ENCODE measurements at regions of chr2 and their contacts with region 1.

Region 1: DNA sequence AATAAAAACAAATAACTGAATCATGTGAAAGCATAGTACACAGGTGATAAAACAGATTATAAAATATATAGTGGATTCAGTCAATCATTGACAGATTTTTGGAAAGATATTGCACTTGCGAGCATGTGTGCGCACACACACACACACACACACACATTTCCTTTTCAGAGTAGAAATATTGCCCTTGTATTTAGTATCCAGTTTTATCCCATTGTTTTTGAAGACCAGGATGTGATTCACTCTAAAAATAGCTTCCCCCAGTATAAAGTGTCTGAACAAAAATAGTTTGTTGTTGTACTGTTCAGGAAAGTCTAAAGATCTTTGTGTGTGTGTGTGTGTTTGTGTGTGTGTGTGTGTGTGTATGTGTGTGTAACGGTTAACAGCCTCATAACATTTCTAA is 145.4 kb downstream of the CALCRL start:
- DNase-seq: no peak
- H3K4me3 ChIP-seq: peak overlapping the region; percentile 47
- H3K27ac ChIP-seq: peak overlapping the region; percentile 60
- H3K4me1 ChIP-seq: peaks cover 18% of the 10 kb centered on the region
- H3K27me3 ChIP-seq: no peaks in the 10 kb centered on the region
- CTCF ChIP-seq: no peak

Region 2: DNA sequence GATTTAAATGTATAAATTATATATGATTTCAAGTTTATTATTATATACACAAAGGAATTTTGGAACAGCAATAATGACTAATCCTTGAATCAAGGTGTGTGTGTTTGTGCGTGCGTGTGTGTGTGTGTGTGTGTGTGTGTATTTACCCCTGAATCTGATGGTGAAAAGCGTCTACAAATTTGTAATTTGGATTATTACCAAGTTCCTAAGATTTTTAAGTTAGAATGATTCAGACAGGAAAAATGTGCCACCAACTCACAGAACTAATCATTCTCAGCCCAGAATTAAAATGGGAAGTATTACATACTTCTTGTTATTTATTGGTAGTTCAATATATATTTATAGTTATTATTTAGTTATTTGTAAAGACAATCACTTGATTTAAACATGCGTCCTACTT is 133.1 kb after region 1 on chr2:
- intact Hi-C with region 1: loop called (anchors 5 kb)
- DNase-seq: no peak
- H3K4me3 ChIP-seq: no peak overlapping the region
- H3K27ac ChIP-seq: no peak overlapping the region
- H3K4me1 ChIP-seq: peaks cover 58% of the 10 kb centered on the region
- H3K27me3 ChIP-seq: no peaks in the 10 kb centered on the region
- CTCF ChIP-seq: no peak

Region 3: GRCh38 chr2:187447336-187447735 is 144.7 kb after region 1 on chr2:
- intact Hi-C with region 1: loop called (anchors 5 kb)
- DNase-seq: no peak
- H3K4me3 ChIP-seq: peak overlapping the region; percentile 63
- H3K27ac ChIP-seq: peak overlapping the region; percentile 73
- H3K4me1 ChIP-seq: no peaks in the 10 kb centered on the region
- H3K27me3 ChIP-seq: no peaks in the 10 kb centered on the region
- CTCF ChIP-seq: no peak

Measured in left ventricle myocardium inferior (tissue), 1 donor.